ENCODE measurements at regions of chr2 and their contacts with region 1.

Region 1: DNA sequence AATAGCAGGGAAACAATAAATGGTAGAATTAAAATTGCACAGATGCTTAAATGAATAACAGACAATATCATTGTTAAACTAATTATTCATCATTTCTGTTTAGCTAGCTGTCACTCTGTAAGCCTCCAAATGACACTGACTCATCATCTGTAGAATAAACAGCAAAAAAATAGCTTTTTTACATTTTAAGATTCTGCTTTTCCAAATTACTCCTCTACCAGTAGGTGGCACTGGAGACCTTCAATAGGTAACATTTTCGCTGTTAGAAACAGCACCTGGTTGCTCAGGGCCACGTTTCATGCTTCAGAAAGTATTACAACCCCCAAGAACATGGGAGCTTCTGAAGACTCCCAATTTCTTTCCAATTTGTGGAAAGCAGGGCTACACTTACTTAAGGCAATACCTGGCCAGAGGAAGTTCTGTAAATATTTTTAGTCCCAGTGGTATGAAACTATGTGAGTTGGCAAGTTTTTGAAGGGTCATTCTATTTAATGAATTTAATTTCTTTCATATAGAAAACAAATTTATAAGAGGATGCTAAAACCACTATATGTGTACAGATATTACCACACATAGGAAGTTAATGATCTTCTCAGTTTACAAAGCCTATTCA is 45.4 kb downstream of the TTN start:
- DNase-seq: peak; percentile 60
- ATAC-seq: peak; percentile 86
- H3K4me3 ChIP-seq: no peak overlapping the region
- H3K27ac ChIP-seq: no peak overlapping the region
- H3K4me1 ChIP-seq: no peaks in the 10 kb centered on the region
- H3K27me3 ChIP-seq: no peaks in the 10 kb centered on the region
- CTCF ChIP-seq: peak; percentile 82
- EP300 ChIP-seq: no peak
- POLR2A ChIP-seq: no peak
- RAD21 ChIP-seq: peak; percentile 62; the same call in 1 of the 2 replicates

Region 2: GRCh38 chr2:178914259-178914849 is 152.5 kb after region 1 on chr2:
- CTCF ChIA-PET with region 1: interaction called, 41 read pairs
- POLR2A ChIA-PET with region 1: no interaction called
- in situ Hi-C with region 1: loop called (anchors 5 kb)
- intact Hi-C with region 1: loop called (anchors 1 kb)
- DNase-seq: peak; percentile 76
- ATAC-seq: peak; percentile 99
- H3K4me3 ChIP-seq: no peak overlapping the region
- H3K27ac ChIP-seq: no peak overlapping the region
- H3K4me1 ChIP-seq: no peaks in the 10 kb centered on the region
- H3K27me3 ChIP-seq: peaks cover 0 to 4% of the 10 kb centered on the region in 2 experiments; a peak in 1 of 5 replicates
- CTCF ChIP-seq: peak; percentile 93
- EP300 ChIP-seq: no peak
- POLR2A ChIP-seq: no peak
- RAD21 ChIP-seq: peak; percentile 61

Region 3: DNA sequence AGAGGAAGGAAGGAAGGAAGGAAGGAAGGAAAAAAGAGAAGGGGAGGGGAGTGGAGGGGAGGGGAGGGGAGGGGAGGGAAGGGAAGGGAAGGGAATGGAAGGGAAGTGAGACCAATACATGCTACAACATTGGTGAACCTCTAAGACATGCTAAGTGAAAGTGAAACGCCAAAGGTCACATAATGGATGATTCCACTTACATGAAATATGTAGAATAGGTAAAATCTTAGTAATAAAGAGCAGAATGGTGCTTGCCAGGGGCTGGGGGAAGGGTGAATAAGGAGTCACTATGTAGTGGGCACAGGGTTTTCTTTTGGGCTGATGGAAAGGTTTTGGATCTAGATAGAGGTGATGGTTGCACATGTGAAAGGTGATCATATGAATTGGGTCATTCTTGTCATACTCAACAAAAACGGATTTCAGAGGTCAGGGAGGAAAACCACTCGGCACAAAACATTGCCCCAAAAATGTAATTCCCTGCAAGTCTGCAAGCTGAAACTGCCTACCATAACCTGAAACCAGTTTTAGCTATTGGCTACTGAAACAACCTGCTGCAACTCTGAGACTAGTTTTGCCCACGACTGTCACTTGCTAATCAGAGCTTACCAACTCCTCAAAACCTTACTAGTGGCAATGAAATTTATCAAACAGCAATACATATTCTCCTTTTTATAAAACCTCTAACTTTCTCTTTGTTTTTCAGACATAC is 228.8 kb after region 1 on chr2:
- CTCF ChIA-PET with region 1: no interaction called
- POLR2A ChIA-PET with region 1: no interaction called
- in situ Hi-C with region 1: no loop called
- intact Hi-C with region 1: loop called (anchors 1 kb)
- DNase-seq: no peak
- ATAC-seq: no peak
- H3K4me3 ChIP-seq: no peak overlapping the region
- H3K27ac ChIP-seq: no peak overlapping the region
- H3K4me1 ChIP-seq: no peaks in the 10 kb centered on the region
- H3K27me3 ChIP-seq: no peaks in the 10 kb centered on the region
- CTCF ChIP-seq: no peak
- EP300 ChIP-seq: no peak
- POLR2A ChIP-seq: no peak
- RAD21 ChIP-seq: no peak

Region 4: DNA sequence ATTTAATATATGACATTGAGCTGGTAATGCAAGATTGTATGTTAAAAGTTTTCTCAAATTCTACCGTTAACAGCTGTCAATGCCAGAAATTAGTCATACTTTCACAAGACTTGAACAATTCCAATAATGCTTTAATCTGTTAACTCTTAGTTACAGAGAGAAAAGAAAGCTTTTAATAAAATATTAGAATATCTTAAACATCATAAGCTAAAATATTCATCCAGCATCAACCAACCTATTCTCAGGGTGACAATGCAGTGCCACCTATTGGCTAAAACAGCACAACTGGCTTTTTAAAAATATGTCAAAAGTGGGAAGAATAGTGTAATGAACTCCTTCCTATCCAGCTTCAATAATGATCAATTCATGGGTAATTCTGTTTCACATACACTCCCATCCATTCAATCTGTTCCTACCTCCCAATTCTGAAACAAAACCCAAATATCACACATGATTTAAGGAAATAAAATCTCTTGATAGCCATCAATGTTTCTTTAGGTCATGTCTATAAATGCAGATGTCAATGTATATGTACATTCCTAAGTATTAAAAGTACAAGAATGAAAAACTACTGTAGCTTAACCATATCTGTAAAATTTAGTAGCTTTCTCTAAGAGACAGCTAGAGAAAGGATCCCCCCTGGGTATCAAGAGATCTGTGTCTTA is 367.8 kb after region 1 on chr2:
- CTCF ChIA-PET with region 1: no interaction called
- POLR2A ChIA-PET with region 1: no interaction called
- in situ Hi-C with region 1: no loop called
- intact Hi-C with region 1: loop called (anchors 5 kb)
- DNase-seq: no peak
- ATAC-seq: peak; percentile 53; the same call in 1 of the 3 replicates
- H3K4me3 ChIP-seq: no peak overlapping the region
- H3K27ac ChIP-seq: no peak overlapping the region
- H3K4me1 ChIP-seq: no peaks in the 10 kb centered on the region
- H3K27me3 ChIP-seq: no peaks in the 10 kb centered on the region
- CTCF ChIP-seq: peak; percentile 65
- EP300 ChIP-seq: no peak
- POLR2A ChIP-seq: no peak
- RAD21 ChIP-seq: no peak

Measured in HepG2 (cell line).